ENCODE measurements at regions of chr21 and their contacts with region 1.

Region 1: GRCh38 chr21:45820171-45821091 is 161.1 kb upstream of the COL6A1 start:
- DNase-seq: peak; percentile 64 to 82
- ATAC-seq: peak; percentile 83 to 90 (median 87)
- H3K4me3 ChIP-seq: no peak overlapping the region
- H3K27ac ChIP-seq: no peak overlapping the region
- H3K4me1 ChIP-seq: peaks cover 0 to 19% (median 0%) of the 10 kb centered on the region in 9 donors
- H3K27me3 ChIP-seq: peaks cover 0 to 26% (median 0%) of the 10 kb centered on the region in 7 donors
- CTCF ChIP-seq: peak; percentile 63 to 90 (median 81)

Region 2: DNA sequence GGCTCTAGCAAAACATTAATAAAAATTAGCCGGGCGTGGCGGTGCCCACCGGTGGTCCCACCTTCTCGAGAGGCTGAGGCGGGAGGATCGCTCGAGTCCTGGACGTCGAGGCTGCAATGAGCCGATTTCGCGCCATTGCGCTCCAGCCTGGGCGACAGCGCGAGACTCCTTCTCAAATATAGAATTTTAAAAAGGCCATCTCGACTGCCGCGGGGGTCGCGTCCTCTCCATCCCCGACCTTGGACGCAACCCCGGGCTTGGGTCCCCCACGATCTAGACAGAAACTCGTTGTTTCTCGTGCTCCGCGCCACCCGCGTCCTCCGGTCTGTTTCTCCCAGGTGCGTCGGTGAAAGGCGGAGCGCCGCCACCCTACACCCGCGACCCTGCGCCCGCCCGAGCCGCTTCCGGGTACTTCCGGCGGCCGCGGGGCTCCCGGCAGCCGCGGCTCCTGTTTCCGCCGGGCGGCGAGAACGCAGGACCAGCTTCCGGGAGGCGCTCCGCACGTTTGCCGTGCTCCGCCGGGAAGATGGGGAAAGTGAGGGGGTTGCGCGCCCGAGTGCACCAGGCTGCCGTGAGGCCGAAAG is 880.8 kb before region 1 on chr21 and contains the start of gene SLX9:
- intact Hi-C with region 1: loop called in 1 of 10 experiments (anchors 10 kb)
- DNase-seq: peak; percentile 66 to 83
- ATAC-seq: peak; percentile 82 to 95 (median 88)
- H3K4me3 ChIP-seq: peak within 1 kb of the TSS; percentile 75 to 97 (median 87)
- H3K27ac ChIP-seq: peak within 1 kb of the TSS in 9 of 10 donors; percentile 70 to 88 (median 80)
- H3K4me1 ChIP-seq: peaks cover 3 to 41% (median 30%) of the 10 kb centered on the region in 9 donors
- H3K27me3 ChIP-seq: peaks cover 0 to 6% (median 0%) of the 10 kb centered on the region in 7 donors
- CTCF ChIP-seq: peak in 1 of 9 donors; percentile 4
- total RNA-seq, gene SLX9: 42.4 to 67.2 (median 52.6) TPM

Region 3: DNA sequence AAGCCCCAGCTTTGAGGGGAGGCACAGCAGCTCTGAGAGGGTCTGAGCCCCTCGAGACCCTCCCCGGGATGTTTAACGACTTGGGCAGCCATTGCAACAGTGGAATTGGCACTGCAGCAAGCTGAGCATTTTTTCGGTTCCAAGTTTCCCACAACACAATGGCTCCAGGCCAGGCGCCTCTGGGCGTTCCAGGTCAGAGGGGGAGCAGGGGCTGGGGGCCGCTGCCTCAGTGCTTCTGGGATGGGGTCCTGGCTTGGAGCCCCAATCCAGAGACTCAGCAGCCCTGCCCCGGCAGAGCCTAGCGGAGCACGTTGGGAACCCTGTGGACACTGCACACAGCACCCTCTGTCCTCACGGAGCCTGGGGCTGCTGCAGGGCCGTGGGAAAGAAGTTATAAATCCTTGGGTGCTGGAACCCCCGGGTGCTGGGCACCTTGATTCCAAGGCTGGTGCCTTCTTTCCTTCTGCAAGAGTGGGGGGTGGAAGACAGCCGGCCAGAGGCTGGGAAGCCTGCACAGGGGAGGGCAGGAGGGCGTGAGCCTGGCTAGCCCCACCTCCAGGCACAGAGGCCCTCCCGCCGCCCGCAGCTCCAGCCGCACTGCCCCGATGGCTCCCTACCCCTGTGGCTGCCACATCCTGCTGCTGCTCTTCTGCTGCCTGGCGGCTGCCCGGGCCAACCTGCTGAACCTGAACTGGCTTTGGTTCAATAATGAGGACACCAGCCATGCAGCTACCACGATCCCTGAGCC is 365.3 kb before region 1 on chr21:
- intact Hi-C with region 1: loop called in 1 of 10 experiments (anchors 10 kb)
- DNase-seq: peak in 1 of 2 donors; percentile 61
- ATAC-seq: peak; percentile 72 to 88 (median 80)
- H3K4me3 ChIP-seq: peak overlapping the region in 9 of 10 donors; percentile 33 to 53 (median 42)
- H3K27ac ChIP-seq: peak overlapping the region in 8 of 10 donors; percentile 10 to 58 (median 24)
- H3K4me1 ChIP-seq: peaks cover 0 to 44% (median 11%) of the 10 kb centered on the region in 9 donors
- H3K27me3 ChIP-seq: no peaks in the 10 kb centered on the region
- CTCF ChIP-seq: no peak

Region 4: DNA sequence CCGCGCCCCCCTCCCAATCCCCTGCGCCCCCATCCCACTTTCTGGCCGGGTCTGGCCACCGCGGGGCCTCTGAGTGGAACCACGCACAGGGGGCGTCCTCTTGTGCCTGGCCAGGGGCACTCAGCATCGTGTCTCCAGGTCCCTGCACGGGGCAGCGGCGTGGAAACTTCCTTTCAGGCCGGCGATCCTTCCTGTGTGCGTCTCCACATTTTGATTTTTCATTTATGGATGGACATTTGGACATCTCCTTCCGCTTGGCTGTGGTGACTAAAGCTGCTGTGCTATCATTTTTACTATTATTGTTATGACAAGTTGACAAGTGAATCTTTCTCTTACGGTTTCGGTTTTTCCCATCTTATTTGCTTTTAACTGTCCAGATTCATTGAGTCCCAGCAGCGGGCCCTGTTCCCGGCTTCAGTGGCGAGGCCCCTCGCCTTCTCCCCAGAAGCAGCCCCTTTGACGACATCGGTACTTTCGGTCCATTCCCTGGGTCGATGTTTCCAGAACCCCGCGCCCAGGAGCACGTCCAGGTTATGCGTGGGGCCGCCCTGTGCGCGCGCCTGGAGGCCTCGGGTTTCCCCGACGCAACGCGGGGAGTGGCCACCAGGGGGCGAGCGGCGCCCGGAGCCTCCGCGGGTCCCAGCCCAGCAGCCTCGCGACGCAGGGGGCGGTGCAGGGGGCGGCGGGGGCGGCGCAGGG is 265.8 kb before region 1 on chr21:
- intact Hi-C with region 1: loop called (anchors 1 to 5 kb)
- DNase-seq: peak; percentile 73 to 90
- ATAC-seq: peak; percentile 68 to 87 (median 82)
- H3K4me3 ChIP-seq: peak overlapping the region in 9 of 10 donors; percentile 37 to 72 (median 56)
- H3K27ac ChIP-seq: peak overlapping the region in 4 of 10 donors; percentile 10 to 92 (median 60)
- H3K4me1 ChIP-seq: peaks cover 0 to 43% (median 6%) of the 10 kb centered on the region in 9 donors
- H3K27me3 ChIP-seq: peaks cover 0 to 18% (median 0%) of the 10 kb centered on the region in 7 donors
- CTCF ChIP-seq: peak; percentile 74 to 82 (median 78)

Region 5: DNA sequence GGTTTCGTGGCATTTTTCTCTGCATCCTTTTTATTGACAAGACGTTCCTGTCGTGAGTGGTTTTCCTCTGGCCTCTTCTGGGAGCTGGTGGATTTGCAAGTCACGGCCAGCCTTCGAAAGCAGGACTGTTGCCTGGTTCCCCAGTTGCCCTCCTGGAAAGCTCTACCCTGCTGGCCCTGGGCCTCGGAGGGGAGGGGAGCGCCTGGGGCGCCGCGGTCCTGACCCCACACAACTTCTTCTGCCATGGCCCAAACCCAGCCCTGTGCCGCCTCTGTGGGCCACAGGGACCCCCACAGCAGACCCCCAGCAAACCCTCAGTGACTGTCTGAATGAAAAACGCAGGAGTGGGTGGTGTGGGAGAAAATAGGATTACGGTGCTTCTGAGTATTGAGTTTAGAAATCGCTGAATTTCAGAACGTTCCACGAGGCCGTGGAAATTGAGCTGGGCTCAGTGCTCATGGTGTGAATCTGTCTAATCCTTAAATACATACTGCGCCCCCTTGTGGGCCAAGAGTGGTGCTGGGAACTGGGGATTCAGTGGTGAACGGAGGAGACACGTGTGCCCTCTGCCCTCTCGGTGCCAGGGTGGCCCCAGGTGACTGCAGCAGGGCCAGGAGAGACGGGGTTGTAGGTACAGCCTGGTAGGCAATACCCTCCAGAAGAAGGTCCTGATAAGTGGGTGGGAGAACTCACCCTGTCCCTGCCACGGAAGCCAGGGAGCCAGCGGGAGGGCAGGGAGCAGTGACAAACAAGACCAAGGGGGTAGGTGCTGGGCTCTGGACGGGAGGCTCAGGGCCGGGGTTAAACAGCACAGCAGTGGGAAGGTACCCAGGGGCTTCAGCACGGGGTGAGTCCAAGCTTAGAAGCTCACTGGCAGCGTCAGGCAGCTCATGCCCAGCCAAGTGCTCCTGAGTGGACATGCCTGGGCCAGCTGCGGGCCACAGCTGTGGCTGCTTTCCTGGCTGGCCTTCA is 60.0 kb after region 1 on chr21:
- intact Hi-C with region 1: no loop called
- DNase-seq: peak; percentile 44 to 65
- ATAC-seq: peak; percentile 62 to 86 (median 73)
- H3K4me3 ChIP-seq: no peak overlapping the region
- H3K27ac ChIP-seq: no peak overlapping the region
- H3K4me1 ChIP-seq: peaks cover 0 to 20% (median 2%) of the 10 kb centered on the region in 9 donors
- H3K27me3 ChIP-seq: peaks cover 0 to 52% (median 0%) of the 10 kb centered on the region in 7 donors
- CTCF ChIP-seq: peak; percentile 17 to 74 (median 65)